Activated CD4-positive, alpha-beta T cell treated with anti-CD3 and anti-CD28 coated beads for 36 hours (primary cell): ENCODE measurements at regions of chr3 and their contacts with region 1.

Region 1: DNA sequence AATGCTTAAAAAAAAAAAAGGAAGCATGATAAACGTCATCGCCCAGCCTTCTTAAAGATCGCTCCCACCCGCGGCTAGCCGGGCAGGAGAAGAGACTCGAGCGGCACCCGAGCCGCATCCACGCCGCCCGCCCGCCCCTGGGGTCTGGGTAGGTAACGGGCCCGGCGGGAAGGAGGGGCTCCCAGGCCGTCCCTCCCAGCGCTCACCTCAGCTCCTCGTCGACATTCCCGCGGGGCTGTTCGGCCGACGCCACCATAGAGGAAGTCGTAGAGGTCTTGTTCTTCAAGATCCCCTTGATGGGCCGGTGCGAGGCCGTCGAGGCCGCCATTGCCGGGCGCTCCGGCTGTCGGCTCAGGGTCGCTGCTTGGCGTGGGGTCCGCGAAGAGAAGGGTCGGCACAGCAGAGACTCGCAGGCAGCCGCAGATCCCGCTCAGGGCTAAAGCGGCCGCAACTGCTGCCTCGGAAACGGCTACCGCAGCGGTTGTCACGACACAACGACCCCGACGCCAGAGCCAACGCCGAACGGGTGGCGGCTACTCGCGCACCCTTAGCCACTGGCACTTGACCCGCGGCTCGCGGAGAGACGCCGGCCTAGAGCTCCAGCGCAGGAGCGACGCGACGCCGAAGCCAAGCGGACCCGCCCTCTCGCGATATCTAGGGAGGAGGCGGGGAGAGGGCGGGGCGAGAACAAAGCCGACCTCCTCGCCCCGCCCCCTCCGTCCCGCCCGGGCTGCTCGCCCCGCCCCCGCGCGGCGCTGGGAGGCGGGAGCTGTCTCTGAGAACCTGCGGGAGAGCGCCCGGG is at the start of gene PPP1R2:
- DNase-seq: peak; percentile 97
- ATAC-seq: peak; percentile 72
- H3K4me3 Mint-ChIP-seq: peak within 1 kb of the TSS; percentile 95
- H3K27ac Mint-ChIP-seq: peak within 1 kb of the TSS; percentile 95
- H3K4me1 Mint-ChIP-seq: peaks cover 65% of the 10 kb centered on the region
- H3K27me3 Mint-ChIP-seq: no peaks in the 10 kb centered on the region
- total RNA-seq, gene PPP1R2: 77.0 to 134 TPM

Region 2: DNA sequence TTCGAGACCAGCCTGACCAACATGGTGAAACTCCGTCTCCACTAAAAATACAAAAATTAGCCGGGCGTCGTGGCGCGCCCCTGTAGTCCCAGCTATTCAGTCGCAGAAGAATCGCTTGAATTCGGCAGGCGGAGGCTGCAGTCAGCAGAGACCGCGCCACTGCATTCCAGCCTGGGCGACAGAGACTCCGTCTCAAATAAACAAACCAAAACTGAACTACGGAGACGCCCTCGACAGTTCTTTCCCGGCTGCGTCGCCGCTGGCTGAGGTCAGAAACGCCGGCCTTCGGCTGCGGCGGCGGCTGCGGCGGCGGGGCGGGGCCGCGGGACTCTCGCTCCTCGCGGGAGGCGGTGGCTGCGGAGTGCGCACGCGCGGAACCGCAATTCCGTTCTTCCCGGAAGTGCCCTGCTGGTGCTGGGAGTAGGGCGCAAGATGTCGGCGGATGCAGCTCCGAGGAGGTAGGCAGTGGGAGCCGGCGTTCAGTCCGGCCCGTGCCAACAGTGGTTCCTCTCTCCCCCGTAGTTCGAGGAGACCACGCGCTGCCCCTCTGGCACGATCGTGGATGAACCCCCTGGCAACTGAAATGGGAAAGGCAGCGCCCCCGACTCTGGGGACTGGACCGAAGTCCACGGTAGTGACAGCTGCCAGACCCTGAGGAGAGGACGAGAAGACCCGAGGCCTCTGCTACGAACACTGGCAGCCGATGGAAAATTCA is 959.1 kb before region 1 on chr3:
- CTCF ChIA-PET with region 1: no interaction called
- POLR2A ChIA-PET with region 1: no interaction called
- intact Hi-C with region 1: loop called in 1 of 2 experiments (anchors 5 kb)
- DNase-seq: peak; percentile 96
- ATAC-seq: peak; percentile 88
- H3K4me3 Mint-ChIP-seq: peak overlapping the region; percentile 93
- H3K27ac Mint-ChIP-seq: peak overlapping the region; percentile 97
- H3K4me1 Mint-ChIP-seq: peaks cover 25% of the 10 kb centered on the region
- H3K27me3 Mint-ChIP-seq: no peaks in the 10 kb centered on the region

Region 3: DNA sequence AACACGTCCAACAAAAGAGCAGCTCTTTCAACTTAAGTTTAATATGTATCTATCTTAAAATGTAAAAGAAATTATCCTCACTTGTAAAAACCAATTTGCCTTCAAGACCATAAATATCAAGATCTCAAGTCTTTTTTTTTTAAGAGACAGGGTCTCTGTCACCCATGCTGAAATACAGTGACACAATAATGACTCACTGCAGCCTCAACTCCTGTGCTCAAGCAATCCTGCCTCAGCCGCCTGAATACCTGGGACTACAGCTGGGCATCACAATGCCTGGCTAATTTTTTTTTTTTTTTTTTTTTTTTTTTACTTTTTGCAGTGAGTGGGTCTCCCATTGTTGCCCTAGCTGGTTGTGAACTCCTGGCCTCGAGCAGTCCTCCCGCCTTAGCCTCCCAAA is 126.1 kb before region 1 on chr3:
- CTCF ChIA-PET with region 1: interaction called, 4 read pairs
- POLR2A ChIA-PET with region 1: interaction called, 16 read pairs
- intact Hi-C with region 1: no loop called
- DNase-seq: no peak
- ATAC-seq: no peak
- H3K4me3 Mint-ChIP-seq: no peak overlapping the region
- H3K27ac Mint-ChIP-seq: no peak overlapping the region
- H3K4me1 Mint-ChIP-seq: peaks cover 37% of the 10 kb centered on the region
- H3K27me3 Mint-ChIP-seq: no peaks in the 10 kb centered on the region

Region 4: GRCh38 chr3:195522254-195523023 is 20.5 kb before region 1 on chr3:
- CTCF ChIA-PET with region 1: interaction called, 29 read pairs
- POLR2A ChIA-PET with region 1: interaction called, 4 read pairs
- intact Hi-C with region 1: loop called (anchors 1 to 2 kb)
- DNase-seq: peak; percentile 31
- ATAC-seq: no peak
- H3K4me3 Mint-ChIP-seq: no peak overlapping the region
- H3K27ac Mint-ChIP-seq: peak overlapping the region; percentile 59
- H3K4me1 Mint-ChIP-seq: peaks cover 42% of the 10 kb centered on the region
- H3K27me3 Mint-ChIP-seq: no peaks in the 10 kb centered on the region

Region 5: GRCh38 chr3:195587824-195588223 is 44.9 kb after region 1 on chr3:
- CTCF ChIA-PET with region 1: interaction called, 6 read pairs
- POLR2A ChIA-PET with region 1: no interaction called
- intact Hi-C with region 1: loop called in 1 of 2 experiments (anchors 5 kb)
- DNase-seq: no peak
- ATAC-seq: peak; percentile 24
- H3K4me3 Mint-ChIP-seq: no peak overlapping the region
- H3K27ac Mint-ChIP-seq: no peak overlapping the region
- H3K4me1 Mint-ChIP-seq: peaks cover 4% of the 10 kb centered on the region
- H3K27me3 Mint-ChIP-seq: peaks cover 5% of the 10 kb centered on the region

Region 6: GRCh38 chr3:196774191-196774820 is 1231.4 kb after region 1 on chr3:
- CTCF ChIA-PET with region 1: no interaction called
- POLR2A ChIA-PET with region 1: no interaction called
- intact Hi-C with region 1: no loop called
- DNase-seq: no peak
- ATAC-seq: peak; percentile 79
- H3K4me3 Mint-ChIP-seq: no peak overlapping the region
- H3K27ac Mint-ChIP-seq: peak overlapping the region; percentile 59
- H3K4me1 Mint-ChIP-seq: peaks cover 72% of the 10 kb centered on the region
- H3K27me3 Mint-ChIP-seq: no peaks in the 10 kb centered on the region